GM10248 (cell line): ENCODE measurements at regions of chr17 and their contacts with region 1.

Region 1: DNA sequence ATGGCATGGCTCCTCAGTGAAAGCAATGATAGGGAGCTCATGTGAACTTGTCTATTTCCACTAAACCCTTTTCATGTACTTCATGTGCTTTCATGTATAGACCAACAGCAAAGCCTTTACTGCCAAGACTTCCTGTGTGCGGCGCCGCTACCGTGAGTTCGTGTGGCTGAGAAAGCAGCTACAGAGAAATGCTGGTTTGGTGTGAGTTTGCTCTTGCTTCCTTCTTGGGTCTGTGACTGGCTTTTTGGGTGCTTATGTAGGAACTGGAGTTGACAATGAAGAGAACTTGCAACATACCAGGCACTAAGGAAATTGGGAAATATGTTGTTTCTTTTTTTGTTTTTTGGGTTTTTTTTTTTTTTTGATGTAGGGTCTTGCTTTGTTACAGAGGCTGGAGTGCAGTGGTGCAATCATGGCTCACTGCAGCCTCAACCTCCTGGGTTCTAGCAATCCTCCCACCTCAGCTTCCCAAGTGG is 5.7 kb downstream of the SNX11 start:
- DNase-seq: peak; percentile 58
- CTCF ChIP-seq: no peak

Region 2: GRCh38 chr17:48074315-48075081 is 38.7 kb before region 1 on chr17:
- CTCF ChIA-PET with region 1: interaction called, 27 read pairs
- POLR2A ChIA-PET with region 1: interaction called, 3 read pairs
- DNase-seq: peak; percentile 64
- CTCF ChIP-seq: peak; percentile 81

Region 3: DNA sequence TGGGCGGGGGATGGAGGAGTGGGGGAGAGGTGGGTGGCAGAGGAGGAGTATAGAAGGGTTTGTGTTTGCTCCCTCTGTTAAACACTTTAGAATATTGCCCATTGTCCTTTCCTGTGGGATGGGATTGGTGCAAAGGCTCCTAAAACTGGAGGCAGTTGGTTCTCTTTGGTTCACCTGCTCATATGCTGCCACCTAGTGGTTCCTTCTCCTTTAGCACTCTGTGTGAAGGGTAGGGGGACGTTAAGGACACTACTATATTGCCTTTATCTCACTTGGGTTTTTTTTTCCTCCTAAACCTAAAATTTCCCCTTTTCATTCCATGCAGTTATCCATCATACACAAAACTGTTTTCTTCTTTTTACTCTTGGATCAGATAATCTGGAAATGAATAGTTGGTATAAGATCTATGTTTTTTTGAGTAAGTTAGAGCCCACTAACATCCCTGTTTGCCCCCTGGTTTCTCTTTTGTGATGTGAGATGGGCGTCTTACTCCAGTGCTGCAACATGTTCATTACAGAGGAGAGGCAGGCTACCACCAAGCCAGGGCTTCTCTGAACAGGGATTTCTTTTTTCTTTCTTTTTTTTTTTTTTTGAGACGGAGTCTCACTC is 18.1 kb after region 1 on chr17:
- CTCF ChIA-PET with region 1: interaction called, 23 read pairs
- POLR2A ChIA-PET with region 1: no interaction called
- DNase-seq: peak; percentile 76
- CTCF ChIP-seq: peak; percentile 73

Region 4: DNA sequence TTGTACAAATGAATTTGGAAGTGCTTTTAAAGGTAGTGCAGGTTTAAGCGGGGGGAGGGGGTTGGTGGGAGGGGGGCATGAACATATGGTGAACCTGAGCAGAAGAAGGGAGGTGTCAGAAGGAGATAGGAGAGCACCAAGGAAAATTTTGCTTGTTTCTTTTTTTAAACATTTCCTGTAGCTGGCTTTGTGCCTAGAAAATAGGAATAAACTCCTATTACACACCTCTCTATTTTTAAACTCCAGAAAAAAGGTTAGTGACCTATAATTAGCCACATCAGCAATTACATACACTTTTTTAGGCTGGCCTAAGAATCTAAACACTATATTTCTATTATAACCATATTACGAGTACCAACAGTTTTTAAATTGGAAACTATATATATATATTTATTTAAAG is 157.7 kb after region 1 on chr17:
- CTCF ChIA-PET with region 1: no interaction called
- POLR2A ChIA-PET with region 1: no interaction called
- DNase-seq: no peak
- CTCF ChIP-seq: no peak

Region 5: GRCh38 chr17:48295362-48296288 is 182.4 kb after region 1 on chr17:
- CTCF ChIA-PET with region 1: no interaction called
- POLR2A ChIA-PET with region 1: no interaction called
- DNase-seq: peak; percentile 35
- CTCF ChIP-seq: no peak